H1 (cell line): ENCODE measurements at regions of chr10 and their contacts with region 1.

Region 1: GRCh38 chr10:71999360-72000072 is 35.3 kb downstream of the CHST3 start:
- DNase-seq: no peak
- H3K4me3 ChIP-seq: no peak overlapping the region
- H3K27ac ChIP-seq: no peak overlapping the region
- H3K4me1 ChIP-seq: peaks cover 0 to 8% (median 1%) of the 10 kb centered on the region in 4 experiments; a peak in 3 of 7 replicates
- H3K27me3 ChIP-seq: no peaks in the 10 kb centered on the region
- CTCF ChIP-seq: no peak
- EP300 ChIP-seq: no peak
- POLR2A ChIP-seq: no peak
- RAD21 ChIP-seq: no peak

Region 2: GRCh38 chr10:71974489-71975021 is 25.0 kb before region 1 on chr10:
- CTCF ChIA-PET with region 1: interaction called, 27 read pairs
- POLR2A ChIA-PET with region 1: interaction called, 3 read pairs
- DNase-seq: no peak
- H3K4me3 ChIP-seq: no peak overlapping the region
- H3K27ac ChIP-seq: no peak overlapping the region
- H3K4me1 ChIP-seq: peaks cover 0 to 15% (median 4%) of the 10 kb centered on the region in 4 experiments; a peak in 4 of 7 replicates
- H3K27me3 ChIP-seq: no peaks in the 10 kb centered on the region
- CTCF ChIP-seq: no peak
- EP300 ChIP-seq: no peak
- POLR2A ChIP-seq: no peak
- RAD21 ChIP-seq: no peak

Region 3: GRCh38 chr10:72016608-72017312 is 17.2 kb after region 1 on chr10:
- CTCF ChIA-PET with region 1: no interaction called
- POLR2A ChIA-PET with region 1: no interaction called
- DNase-seq: no peak
- H3K4me3 ChIP-seq: no peak overlapping the region
- H3K27ac ChIP-seq: no peak overlapping the region
- H3K4me1 ChIP-seq: peaks cover 0 to 4% (median under 1%) of the 10 kb centered on the region in 4 experiments; a peak in 2 of 7 replicates
- H3K27me3 ChIP-seq: no peaks in the 10 kb centered on the region
- CTCF ChIP-seq: no peak
- EP300 ChIP-seq: no peak
- POLR2A ChIP-seq: no peak
- RAD21 ChIP-seq: no peak